Astrocyte of the cerebellum (primary cell): ENCODE measurements at regions of chr3 and their contacts with region 1.

Region 1: DNA sequence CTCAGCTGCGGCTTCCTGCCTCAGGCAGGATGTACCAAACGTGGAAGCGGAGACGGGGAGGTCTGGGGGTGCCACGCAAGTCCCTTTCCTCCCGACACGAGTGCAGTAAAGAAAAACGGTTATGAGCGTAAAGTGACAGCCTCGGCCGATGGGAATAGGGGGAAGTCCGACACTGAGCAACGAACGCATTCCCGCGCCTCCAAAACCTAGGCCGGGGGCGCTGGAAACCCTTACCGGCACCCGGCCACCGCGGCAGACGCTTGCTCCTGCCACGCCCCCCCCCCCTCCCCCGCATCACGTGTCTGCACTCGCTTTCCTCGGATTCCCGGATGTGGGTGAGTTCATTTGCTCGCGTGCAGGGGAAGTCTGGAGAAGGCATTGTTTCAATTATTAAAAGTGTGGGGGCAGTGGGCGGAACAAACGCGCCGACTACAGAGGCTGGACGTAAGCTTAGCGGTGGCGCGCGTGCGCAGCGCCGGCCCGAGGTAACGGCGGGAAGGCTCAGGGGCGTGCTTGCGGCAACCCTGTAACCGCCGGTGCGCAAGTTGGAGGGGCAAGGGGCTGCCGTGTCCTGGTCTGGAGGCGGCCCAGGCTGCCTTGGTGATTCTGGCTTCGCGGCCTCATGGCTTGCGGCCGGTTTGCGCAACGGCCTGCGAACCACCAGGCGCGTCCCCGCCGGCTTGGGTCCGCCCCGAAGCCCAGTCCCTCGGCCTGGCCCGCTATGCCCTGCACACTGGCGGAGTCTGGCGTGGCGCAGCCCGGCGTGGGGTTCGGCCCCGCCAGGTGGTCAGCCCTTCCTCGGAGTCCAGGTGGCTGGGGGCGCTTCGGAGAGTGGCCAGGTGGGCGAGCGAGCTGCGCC is at the starts of genes ANAPC13 and CEP63:
- DNase-seq: peak; percentile 98
- H3K4me3 ChIP-seq: peak within 1 kb of the TSS; percentile 57
- CTCF ChIP-seq: no peak

Region 2: DNA sequence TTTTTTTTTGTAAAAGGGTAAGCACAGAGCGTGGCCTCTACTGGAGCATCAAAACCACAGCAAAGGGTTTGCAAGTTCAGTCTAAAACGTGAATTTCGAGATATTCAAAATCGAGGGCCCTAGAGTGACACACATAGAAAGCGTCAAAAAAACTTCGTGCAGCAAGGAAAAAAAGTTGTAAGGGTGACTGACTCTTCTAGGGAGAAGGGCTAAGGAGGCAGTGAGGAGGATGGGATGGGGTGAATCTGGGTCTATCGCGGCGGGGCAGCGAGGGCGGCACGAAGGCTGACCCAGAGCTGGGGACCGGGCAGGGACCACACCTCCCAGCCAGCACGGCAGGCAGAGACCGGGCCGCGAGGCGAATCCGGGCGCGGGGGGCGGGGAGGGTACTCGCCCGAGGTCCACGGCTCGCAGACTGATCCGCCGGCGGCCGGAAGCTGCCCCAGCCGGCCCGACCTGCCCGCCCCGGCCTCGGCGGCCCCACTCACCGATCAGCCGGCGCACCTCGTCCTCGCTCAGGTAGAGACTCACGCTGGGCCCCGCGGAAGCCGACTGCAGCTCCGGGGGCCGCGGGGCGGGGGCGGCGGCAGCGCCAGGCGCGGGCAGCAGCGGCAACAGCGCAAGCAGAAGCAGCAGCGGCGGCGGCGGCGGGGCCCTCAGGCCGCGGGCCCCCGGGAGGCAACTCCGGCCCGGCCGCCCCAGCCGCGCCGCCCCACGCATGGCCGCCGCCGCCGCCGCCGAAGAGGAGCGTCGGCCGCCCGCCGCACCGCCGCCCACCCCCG is 235.8 kb before region 1 on chr3:
- in situ Hi-C with region 1: loop called (anchors 25 kb)
- DNase-seq: no peak
- H3K4me3 ChIP-seq: peak overlapping the region; percentile 67
- CTCF ChIP-seq: no peak

Region 3: GRCh38 chr3:134308350-134308891 is 177.5 kb before region 1 on chr3:
- in situ Hi-C with region 1: loop called (anchors 25 kb)
- DNase-seq: peak; percentile 74
- H3K4me3 ChIP-seq: no peak overlapping the region
- CTCF ChIP-seq: peak; percentile 96

Region 4: DNA sequence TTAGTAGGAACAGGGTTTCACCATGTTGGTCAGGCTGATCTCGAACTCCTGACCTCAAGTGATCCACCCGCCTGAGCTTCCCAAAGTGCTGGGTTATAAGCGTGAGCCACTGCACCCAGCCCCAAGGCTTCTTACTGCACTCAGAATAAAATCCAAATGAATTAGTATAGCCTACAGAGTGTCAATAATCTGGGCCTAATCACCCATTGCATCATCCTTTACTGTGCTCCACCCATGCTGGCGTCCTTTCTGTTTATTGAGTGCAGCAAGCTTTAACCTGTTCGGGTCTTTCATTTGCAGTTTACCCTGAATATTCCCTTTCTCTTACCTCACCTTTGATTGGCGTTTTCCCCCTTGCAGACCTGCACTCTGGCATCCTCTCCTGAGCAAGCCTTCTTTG is 77.7 kb after region 1 on chr3:
- in situ Hi-C with region 1: no loop called
- DNase-seq: no peak
- H3K4me3 ChIP-seq: no peak overlapping the region
- CTCF ChIP-seq: no peak